ENCODE measurements at regions of chr9 and their contacts with region 1.

Region 1: GRCh38 chr9:127734747-127735529 is at the start of gene TOR2A:
- DNase-seq: peak; percentile 80 to 99
- H3K4me3 ChIP-seq: peak within 1 kb of the TSS; percentile 73 to 80
- H3K27ac ChIP-seq: peak within 1 kb of the TSS; percentile 92 to 97
- H3K4me1 ChIP-seq: peaks cover 6 to 7% of the 10 kb centered on the region in 2 donors
- H3K27me3 ChIP-seq: no peaks in the 10 kb centered on the region
- CTCF ChIP-seq: peak; percentile 93 to 99 (median 97)
- total RNA-seq, gene TOR2A: not detected

Region 2: GRCh38 chr9:127586537-127586936 is 148.4 kb before region 1 on chr9:
- intact Hi-C with region 1: loop called (anchors 1 kb)
- DNase-seq: peak in 1 of 2 donors; percentile 92
- H3K4me3 ChIP-seq: no peak overlapping the region
- H3K27ac ChIP-seq: no peak overlapping the region
- H3K4me1 ChIP-seq: peaks cover 0 to 9% of the 10 kb centered on the region in 2 donors
- H3K27me3 ChIP-seq: no peaks in the 10 kb centered on the region
- CTCF ChIP-seq: peak; percentile 78 to 96 (median 89)

Region 3: GRCh38 chr9:127611899-127612790 is 122.8 kb before region 1 on chr9 and contains the start of gene STXBP1:
- intact Hi-C with region 1: loop called (anchors 5 kb)
- DNase-seq: peak; percentile 29 to 89
- H3K4me3 ChIP-seq: peak within 1 kb of the TSS; percentile 76 to 95
- H3K27ac ChIP-seq: peak within 1 kb of the TSS; percentile 71 to 77
- H3K4me1 ChIP-seq: peaks cover 0 to 16% of the 10 kb centered on the region in 2 donors
- H3K27me3 ChIP-seq: no peaks in the 10 kb centered on the region
- CTCF ChIP-seq: peak in 2 of 3 experiments; percentile 9 to 13
- total RNA-seq, gene STXBP1: 29.3 TPM

Region 4: DNA sequence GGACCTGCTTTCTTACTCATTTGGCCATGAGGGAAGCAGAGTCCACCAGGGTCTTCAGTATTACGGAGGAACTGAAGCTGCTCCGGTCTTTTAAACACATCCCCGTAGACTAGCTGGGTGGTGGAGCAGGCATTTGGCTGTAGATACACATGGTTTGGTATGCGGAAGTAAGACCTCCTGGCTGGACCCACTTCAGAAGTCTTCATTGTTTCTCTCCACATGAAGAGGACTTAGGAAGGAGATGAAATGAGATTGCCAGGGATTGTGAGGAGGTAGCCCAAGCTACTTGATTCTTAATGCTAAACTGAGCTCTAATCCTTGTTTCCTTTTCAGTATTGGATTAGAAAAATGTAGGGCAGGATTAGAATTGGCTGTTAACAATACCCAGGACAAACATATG is 90.0 kb before region 1 on chr9:
- intact Hi-C with region 1: no loop called
- DNase-seq: no peak
- H3K4me3 ChIP-seq: no peak overlapping the region
- H3K27ac ChIP-seq: no peak overlapping the region
- H3K4me1 ChIP-seq: peaks cover 0 to 11% of the 10 kb centered on the region in 2 donors
- H3K27me3 ChIP-seq: no peaks in the 10 kb centered on the region
- CTCF ChIP-seq: no peak

Region 5: DNA sequence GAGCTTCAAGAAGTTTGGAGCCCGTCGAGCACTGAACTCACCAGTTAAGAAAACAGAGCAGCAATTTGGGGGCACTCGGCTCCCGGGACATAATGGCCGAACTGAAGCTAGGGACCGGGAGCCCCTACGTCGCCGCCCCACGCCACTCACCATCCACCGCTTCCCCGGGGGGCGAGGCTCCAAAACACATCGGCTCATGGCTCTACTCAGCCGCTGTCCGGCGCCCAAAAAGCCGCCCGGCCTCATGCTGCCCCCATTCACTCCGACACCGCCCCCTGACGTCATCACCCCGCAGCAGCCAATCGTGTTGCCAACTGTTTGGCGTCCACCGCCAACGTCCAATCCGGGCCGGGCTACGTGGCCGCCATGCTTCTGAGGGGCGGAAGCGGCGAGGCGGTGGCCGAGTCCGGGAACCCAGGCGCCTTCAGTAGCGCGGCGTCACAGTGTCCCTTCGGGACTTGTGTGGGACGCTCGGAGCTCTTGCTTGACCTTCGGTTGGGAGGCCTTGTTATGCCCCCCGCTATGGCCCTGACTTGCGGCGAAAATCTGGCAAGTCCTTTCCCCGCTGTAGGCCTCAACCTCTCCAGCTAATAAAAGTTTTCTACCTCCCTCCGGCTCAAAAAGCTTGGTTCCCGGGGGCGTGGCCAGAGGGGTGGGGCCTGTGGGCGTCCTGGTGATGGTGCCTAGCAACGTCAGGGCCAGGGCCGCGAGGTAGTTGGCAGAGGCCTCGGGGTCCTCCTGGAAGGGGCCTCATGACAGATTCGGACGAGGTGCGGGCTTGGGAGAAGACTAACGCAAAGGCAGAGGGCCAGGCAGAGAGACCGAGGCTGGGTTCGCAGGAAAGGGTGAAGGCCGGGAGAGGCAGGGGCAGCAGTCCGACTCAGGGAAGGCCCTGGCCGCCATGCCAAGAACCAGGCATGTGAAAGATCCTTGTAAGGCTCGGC is 19.3 kb before region 1 on chr9 and contains the starts of genes PTRH1 and TTC16:
- intact Hi-C with region 1: loop called (anchors 1 kb)
- DNase-seq: peak; percentile 84 to 99
- H3K4me3 ChIP-seq: peak within 1 kb of the TSS; percentile 61 to 93
- H3K27ac ChIP-seq: peak within 1 kb of the TSS; percentile 82 to 85
- H3K4me1 ChIP-seq: peaks cover 0 to 10% of the 10 kb centered on the region in 2 donors
- H3K27me3 ChIP-seq: no peaks in the 10 kb centered on the region
- CTCF ChIP-seq: no peak
- total RNA-seq, gene PTRH1: 5.4 TPM
- total RNA-seq, gene TTC16: not detected

Region 6: GRCh38 chr9:127754099-127755050 is 19.4 kb after region 1 on chr9:
- intact Hi-C with region 1: no loop called
- DNase-seq: no peak
- H3K4me3 ChIP-seq: peak overlapping the region in 1 of 2 donors; percentile 33
- H3K27ac ChIP-seq: no peak overlapping the region
- H3K4me1 ChIP-seq: peaks cover 0 to 4% of the 10 kb centered on the region in 2 donors
- H3K27me3 ChIP-seq: peaks cover 6% of the 10 kb centered on the region
- CTCF ChIP-seq: no peak

Region 7: DNA sequence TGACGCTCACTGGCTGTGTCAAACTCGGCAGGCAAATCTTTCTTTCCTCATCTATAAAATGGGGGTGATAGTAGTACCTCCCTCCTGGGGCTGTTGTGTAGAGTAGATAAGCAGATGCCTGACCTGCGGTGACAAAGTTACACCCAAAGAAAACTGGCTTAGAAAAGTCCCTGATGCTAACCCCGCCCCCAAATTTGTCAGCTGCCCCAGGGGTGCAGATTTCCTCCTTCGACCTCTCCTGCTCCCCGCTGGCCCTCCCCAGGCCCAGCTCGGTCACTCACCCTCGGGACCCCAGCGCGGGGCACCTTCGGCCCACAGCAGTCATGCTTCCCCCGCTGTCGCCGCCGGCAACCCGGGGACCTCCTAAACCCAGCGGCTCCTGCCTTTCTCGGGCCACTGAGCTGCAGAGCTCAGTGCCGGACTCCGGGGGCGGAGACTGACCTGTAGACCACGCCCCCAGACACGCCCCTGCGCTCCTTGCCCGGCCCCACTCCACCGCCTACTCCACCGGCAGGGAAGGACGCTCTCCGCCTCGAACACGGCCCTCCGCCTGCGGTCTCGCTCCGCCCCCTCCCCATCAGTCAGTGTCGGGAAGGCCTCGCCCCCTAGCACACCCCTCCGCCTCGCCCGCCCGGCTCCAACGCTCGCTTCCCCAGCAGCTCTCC is 36.1 kb after region 1 on chr9:
- intact Hi-C with region 1: loop called (anchors 1 kb)
- DNase-seq: peak; percentile 94 to 99
- H3K4me3 ChIP-seq: peak overlapping the region; percentile 62 to 64
- H3K27ac ChIP-seq: peak overlapping the region in 1 of 2 donors; percentile 59
- H3K4me1 ChIP-seq: peaks cover 3 to 8% of the 10 kb centered on the region in 2 donors
- H3K27me3 ChIP-seq: no peaks in the 10 kb centered on the region
- CTCF ChIP-seq: no peak

Region 8: GRCh38 chr9:127828262-127829031 is 93.5 kb after region 1 on chr9:
- intact Hi-C with region 1: no loop called
- DNase-seq: peak; percentile 67 to 93
- H3K4me3 ChIP-seq: peak overlapping the region; percentile 34 to 48
- H3K27ac ChIP-seq: peak overlapping the region; percentile 89 to 95
- H3K4me1 ChIP-seq: peaks cover 20 to 59% of the 10 kb centered on the region in 2 donors
- H3K27me3 ChIP-seq: no peaks in the 10 kb centered on the region
- CTCF ChIP-seq: no peak

Region 9: GRCh38 chr9:127869310-127870152 is 134.6 kb after region 1 on chr9:
- intact Hi-C with region 1: loop called (anchors 2 kb)
- DNase-seq: peak; percentile 55 to 93
- H3K4me3 ChIP-seq: no peak overlapping the region
- H3K27ac ChIP-seq: peak overlapping the region; percentile 63 to 67
- H3K4me1 ChIP-seq: peaks cover 13% of the 10 kb centered on the region in 2 donors
- H3K27me3 ChIP-seq: no peaks in the 10 kb centered on the region
- CTCF ChIP-seq: peak; percentile 84 to 97 (median 88)

Region 10: DNA sequence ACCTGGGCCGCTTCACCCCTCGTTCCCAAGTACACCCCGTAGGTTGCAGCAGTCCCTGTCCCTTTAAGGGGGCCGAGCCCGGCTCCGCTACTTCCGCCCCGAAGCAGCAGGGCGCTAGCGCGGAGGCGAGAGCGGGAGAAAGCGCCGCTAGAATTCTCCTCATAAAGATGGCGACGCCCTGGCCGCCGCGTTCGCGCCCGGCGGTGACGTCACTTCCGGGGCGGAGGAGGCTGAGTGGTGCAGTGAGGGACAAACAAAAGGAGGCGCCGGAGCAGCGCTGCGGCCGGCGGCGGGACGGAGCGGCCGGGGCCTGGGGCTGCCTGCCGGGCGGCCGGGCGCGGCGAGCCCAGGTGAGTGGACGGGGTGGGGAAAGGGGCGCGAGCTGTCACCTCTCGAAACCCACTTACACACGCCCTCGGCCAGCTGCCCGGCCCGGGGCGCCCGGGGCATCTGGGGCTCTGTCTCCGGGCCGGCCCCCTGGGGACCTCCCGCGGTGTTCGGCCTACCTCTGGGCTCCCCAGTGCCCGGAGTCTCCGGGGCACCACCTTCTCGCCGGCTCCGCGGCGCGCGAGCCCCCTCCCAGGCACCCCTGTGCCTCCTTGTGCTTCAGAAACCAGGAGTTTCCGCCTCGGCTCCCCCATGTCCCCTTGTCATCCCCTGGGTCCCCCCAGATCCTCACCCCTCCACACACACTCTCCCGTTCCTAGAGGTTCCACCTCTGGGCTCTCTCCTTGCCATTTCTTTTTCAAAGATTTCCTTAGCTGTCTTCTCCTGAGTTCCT is 1147.2 kb after region 1 on chr9 and contains the starts of genes KYAT1 and LRRC8A:
- intact Hi-C with region 1: no loop called
- DNase-seq: peak; percentile 93 to 99
- H3K4me3 ChIP-seq: peak within 1 kb of the TSS; percentile 89 to 90
- H3K27ac ChIP-seq: peak within 1 kb of the TSS; percentile 96 to 98
- H3K4me1 ChIP-seq: peaks cover 25 to 46% of the 10 kb centered on the region in 2 donors
- H3K27me3 ChIP-seq: no peaks in the 10 kb centered on the region
- CTCF ChIP-seq: peak in 1 of 3 experiments; percentile 4
- total RNA-seq, gene KYAT1: 4.9 TPM
- total RNA-seq, gene LRRC8A: 227 TPM

Measured in ascending aorta (tissue), 2 donors.